Esophagus squamous epithelium (tissue), 5 donors: ENCODE measurements at regions of chr17 and their contacts with region 1.

Region 1: GRCh38 chr17:48478224-48479013 is 48.4 kb upstream of the SKAP1 start:
- DNase-seq: no peak
- H3K4me3 ChIP-seq: no peak overlapping the region
- H3K27ac ChIP-seq: no peak overlapping the region
- H3K4me1 ChIP-seq: peaks cover 0 to 7% (median 5%) of the 10 kb centered on the region in 3 donors
- H3K27me3 ChIP-seq: peaks cover 0 to 59% (median 0%) of the 10 kb centered on the region in 4 donors
- CTCF ChIP-seq: no peak
- POLR2A ChIP-seq: no peak

Region 2: DNA sequence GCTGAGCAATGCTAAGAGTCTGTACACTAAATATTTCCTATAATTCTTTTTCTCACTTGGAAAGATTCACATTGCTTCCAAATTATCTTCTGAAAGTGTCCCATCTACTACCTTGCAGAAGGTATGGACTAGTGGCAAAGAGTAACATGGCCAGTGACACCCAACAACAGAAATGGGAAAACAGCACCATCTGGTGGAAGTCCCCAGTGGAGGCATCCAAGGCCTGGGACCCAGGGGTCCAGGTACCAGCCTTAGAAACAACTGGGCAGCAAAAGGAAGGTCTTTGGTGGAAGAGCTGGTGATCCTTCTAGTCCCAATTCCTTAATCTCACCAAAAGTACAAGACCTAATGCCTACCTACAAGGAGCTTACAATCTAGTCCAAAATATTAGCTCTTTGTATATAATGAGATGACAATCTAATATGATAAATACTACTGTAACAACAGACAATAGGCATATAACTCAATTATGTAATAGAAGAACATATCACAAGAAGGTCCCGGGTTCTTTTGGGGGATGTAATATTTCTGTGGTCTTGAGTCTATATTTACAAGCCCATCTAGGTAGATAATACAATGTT is 103.7 kb before region 1 on chr17:
- intact Hi-C with region 1: loop called (anchors 10 kb)
- DNase-seq: no peak
- H3K4me3 ChIP-seq: no peak overlapping the region
- H3K27ac ChIP-seq: no peak overlapping the region
- H3K4me1 ChIP-seq: no peaks in the 10 kb centered on the region
- H3K27me3 ChIP-seq: peaks cover 0 to 81% (median 0%) of the 10 kb centered on the region in 4 donors
- CTCF ChIP-seq: peak; percentile 10 to 68 (median 49)
- POLR2A ChIP-seq: no peak